Natural killer cell (primary cell): ENCODE measurements at regions of chr12 and their contacts with region 1.

Region 1: DNA sequence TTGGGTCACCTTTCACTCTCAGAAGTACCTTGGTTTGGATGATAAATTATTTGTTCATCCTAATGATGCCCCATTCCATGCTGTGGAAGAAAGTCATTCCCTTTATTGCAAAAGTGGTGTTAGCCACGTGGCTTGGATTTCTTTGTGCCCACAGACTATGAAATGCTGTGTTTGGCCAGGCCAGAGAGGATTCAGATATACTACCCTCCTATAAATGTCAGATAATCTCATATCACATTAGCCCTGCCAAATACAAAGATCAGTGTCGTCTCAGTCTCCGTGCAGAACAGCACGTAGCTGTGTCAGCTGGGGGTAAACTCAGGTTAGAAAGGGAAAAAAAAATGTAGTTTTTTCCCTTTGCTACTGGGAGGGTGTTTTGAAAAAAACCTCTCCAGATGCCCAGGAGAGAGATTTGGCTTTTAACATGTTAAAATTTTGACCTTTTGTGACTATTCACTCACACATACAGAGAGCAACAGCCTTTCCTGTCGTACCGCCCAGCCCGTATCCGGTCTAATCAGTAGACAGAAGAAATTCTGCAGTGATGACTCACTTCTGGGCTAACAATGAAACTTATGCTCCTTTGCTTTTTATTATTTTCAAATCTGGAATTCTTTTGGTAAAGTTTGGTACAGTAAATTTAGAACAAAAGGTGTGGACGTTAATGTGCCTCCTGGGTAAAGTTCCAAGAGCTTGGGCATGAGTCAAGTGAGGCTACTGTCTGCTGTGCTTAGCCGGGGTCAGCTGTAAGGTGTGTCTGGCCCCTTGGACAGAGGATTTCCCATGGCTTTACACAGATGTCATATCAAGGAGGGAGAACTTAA is 8.5 kb upstream of the PTPRB start:
- DNase-seq: peak; percentile 11 to 46
- ATAC-seq: peak; percentile 96 to 98 (median 96)
- H3K4me3 ChIP-seq: peak overlapping the region; percentile 11
- H3K4me3 Mint-ChIP-seq: peak overlapping the region; percentile 88
- H3K27ac ChIP-seq: peak overlapping the region; percentile 97
- H3K27ac Mint-ChIP-seq: peak overlapping the region; percentile 92 to 96
- H3K4me1 ChIP-seq: peaks cover 15% of the 10 kb centered on the region
- H3K4me1 Mint-ChIP-seq: peaks cover 42 to 51% of the 10 kb centered on the region in 2 donors
- H3K27me3 ChIP-seq: no peaks in the 10 kb centered on the region
- H3K27me3 Mint-ChIP-seq: no peaks in the 10 kb centered on the region
- CTCF ChIP-seq: no peak

Region 2: GRCh38 chr12:70719672-70720420 is 74.1 kb after region 1 on chr12:
- intact Hi-C with region 1: loop called (anchors 5 kb)
- DNase-seq: peak; percentile 37 to 42
- ATAC-seq: peak; percentile 68 to 87 (median 83)
- H3K4me3 ChIP-seq: peak overlapping the region; percentile 12
- H3K4me3 Mint-ChIP-seq: peak overlapping the region; percentile 82
- H3K27ac ChIP-seq: no peak overlapping the region
- H3K27ac Mint-ChIP-seq: peak overlapping the region; percentile 36 to 89
- H3K4me1 ChIP-seq: peaks cover 5% of the 10 kb centered on the region
- H3K4me1 Mint-ChIP-seq: peaks cover 17 to 26% of the 10 kb centered on the region in 2 donors
- H3K27me3 ChIP-seq: peaks cover 2% of the 10 kb centered on the region
- H3K27me3 Mint-ChIP-seq: peaks cover 8 to 21% of the 10 kb centered on the region in 2 donors
- CTCF ChIP-seq: peak; percentile 94